ENCODE measurements at regions of chr13 and their contacts with region 1.

Region 1: GRCh38 chr13:27374650-27375049 is 49.8 kb upstream of the GTF3A start:
- DNase-seq: peak; percentile 40
- H3K4me3 ChIP-seq: no peak overlapping the region
- CTCF ChIP-seq: peak; percentile 76

Region 2: DNA sequence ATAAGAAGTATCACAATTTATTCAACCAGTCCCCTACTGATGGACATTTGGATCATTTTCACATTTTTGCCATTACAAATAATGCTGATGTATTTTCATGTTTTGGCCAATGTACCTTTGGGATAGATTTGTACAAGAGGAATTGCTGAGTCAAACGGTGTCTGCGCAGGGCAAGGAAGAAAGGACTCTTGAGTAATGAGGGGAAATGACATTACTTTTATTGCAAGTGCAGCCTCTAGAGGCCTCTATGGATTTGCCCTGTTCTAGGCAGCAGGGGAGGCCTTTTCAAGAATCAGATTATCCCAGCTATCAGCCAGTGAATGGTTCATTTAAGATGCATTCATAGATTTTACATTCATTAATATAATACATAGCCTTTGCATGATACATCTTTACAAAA is 16.8 kb after region 1 on chr13:
- CTCF ChIA-PET with region 1: interaction called, 23 read pairs
- POLR2A ChIA-PET with region 1: no interaction called
- DNase-seq: no peak
- H3K4me3 ChIP-seq: no peak overlapping the region
- CTCF ChIP-seq: no peak

Region 3: DNA sequence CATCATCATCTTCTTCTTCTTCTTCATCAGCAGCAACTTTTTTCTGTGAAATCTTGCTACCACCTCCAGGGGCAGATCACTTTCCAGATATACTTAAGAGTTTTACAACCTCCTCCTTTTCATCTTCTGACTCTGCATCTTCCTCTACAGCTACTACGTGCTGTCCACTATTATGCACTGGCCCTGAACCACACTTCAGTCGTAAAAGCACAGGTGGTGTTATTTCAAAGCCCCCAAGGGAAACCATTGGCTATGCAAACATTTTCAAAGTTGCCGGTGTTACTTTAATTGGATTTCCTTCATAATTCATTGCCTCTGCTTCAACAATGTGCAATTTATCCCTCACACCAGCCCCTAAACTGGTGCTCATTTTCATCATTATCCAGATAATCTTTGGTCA is 322.1 kb after region 1 on chr13:
- CTCF ChIA-PET with region 1: no interaction called
- POLR2A ChIA-PET with region 1: no interaction called
- DNase-seq: no peak
- H3K4me3 ChIP-seq: no peak overlapping the region
- CTCF ChIP-seq: no peak